Activated B cell treated with CpG ODN at 0.5 μM for 24 hours (primary cell): ENCODE measurements at regions of chr1 and their contacts with region 1.

Region 1: DNA sequence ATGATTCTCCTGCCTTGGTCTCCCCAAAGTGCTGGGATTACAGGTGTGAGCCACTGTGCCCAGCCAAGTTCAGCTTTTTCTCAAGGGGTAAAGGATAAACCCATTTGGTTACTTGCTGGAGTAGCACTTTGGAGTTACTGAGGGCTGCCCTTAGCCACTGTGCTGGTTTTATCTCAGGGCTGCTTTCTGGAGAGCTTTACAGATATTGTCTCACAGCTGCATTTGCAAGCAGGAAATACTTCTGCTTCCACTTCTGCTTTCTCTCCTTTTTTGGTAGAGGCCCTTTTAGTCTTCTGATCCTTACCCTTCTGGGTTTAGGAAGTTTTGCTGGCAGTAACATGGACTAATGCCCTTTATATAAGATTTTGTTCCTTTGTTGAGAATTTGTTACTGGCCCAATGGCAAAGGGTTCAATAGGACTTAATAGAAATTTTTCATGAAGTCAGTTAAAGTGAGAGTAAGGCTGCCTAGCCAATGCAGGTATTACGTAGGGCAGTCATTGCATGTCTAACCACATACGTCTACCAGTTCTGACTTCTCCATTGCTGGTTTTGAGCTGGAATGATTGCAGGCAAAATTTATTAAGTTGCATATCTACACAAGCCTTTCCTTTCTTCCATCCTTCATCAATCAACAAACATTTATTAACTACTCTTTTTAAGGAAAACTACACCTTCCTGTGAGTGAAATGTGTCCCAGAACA is 24.4 kb downstream of the CAP1 start:
- DNase-seq: no peak
- ATAC-seq: peak; percentile 91
- H3K4me3 Mint-ChIP-seq: peak overlapping the region; percentile 55
- H3K27ac Mint-ChIP-seq: peak overlapping the region; percentile 91
- H3K4me1 Mint-ChIP-seq: peaks cover 70% of the 10 kb centered on the region
- H3K27me3 Mint-ChIP-seq: no peaks in the 10 kb centered on the region
- CTCF ChIP-seq: no peak

Region 2: GRCh38 chr1:40078512-40079333 is 13.8 kb after region 1 on chr1:
- CTCF ChIA-PET with region 1: interaction called, 11 read pairs
- POLR2A ChIA-PET with region 1: interaction called, 12 read pairs
- intact Hi-C with region 1: loop called (anchors 1 kb)
- DNase-seq: no peak
- ATAC-seq: peak; percentile 92
- H3K4me3 Mint-ChIP-seq: no peak overlapping the region
- H3K27ac Mint-ChIP-seq: no peak overlapping the region
- H3K4me1 Mint-ChIP-seq: peaks cover 13% of the 10 kb centered on the region
- H3K27me3 Mint-ChIP-seq: no peaks in the 10 kb centered on the region
- CTCF ChIP-seq: peak; percentile 74